ENCODE measurements at regions of chr11 and their contacts with region 1.

Region 1: GRCh38 chr11:32385998-32386397 is 49.3 kb downstream of the WT1 start:
- DNase-seq: peak; percentile 46
- ATAC-seq: peak; percentile 96
- H3K4me3 Mint-ChIP-seq: no peak overlapping the region
- H3K27ac Mint-ChIP-seq: no peak overlapping the region
- H3K4me1 Mint-ChIP-seq: peaks cover 12% of the 10 kb centered on the region
- H3K27me3 Mint-ChIP-seq: no peaks in the 10 kb centered on the region; the same call in 1 of the 2 replicates
- CTCF ChIP-seq: 0 out of 2 replicates have a peak, but pooled peaks have one; percentile 15

Region 2: DNA sequence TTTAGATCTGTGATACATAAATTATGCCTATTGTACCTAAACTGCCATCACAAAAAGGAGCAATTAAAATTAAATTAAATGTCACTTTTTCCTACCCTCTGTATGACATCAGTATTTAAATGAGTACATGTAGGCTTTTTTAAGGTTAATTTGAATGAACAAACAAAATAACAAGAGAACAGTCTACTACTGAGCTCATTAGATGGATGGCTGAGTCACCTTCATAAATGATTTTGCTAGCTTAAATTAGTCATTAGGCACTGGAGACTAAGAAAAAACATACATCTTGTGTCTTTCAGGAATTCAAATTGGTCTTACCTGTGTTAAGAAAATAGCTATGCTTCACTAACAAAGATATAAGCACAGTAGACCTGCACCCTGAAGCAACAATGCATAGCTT is 141.5 kb before region 1 on chr11:
- CTCF ChIA-PET with region 1: no interaction called
- POLR2A ChIA-PET with region 1: no interaction called
- DNase-seq: no peak
- ATAC-seq: no peak
- H3K4me3 Mint-ChIP-seq: no peak overlapping the region
- H3K27ac Mint-ChIP-seq: no peak overlapping the region
- H3K4me1 Mint-ChIP-seq: peaks cover 15% of the 10 kb centered on the region
- H3K27me3 Mint-ChIP-seq: no peaks in the 10 kb centered on the region
- CTCF ChIP-seq: no peak

Region 3: GRCh38 chr11:32279672-32280071 is 106.3 kb before region 1 on chr11:
- CTCF ChIA-PET with region 1: no interaction called
- POLR2A ChIA-PET with region 1: no interaction called
- DNase-seq: no peak
- ATAC-seq: peak; percentile 65
- H3K4me3 Mint-ChIP-seq: no peak overlapping the region
- H3K27ac Mint-ChIP-seq: no peak overlapping the region
- H3K4me1 Mint-ChIP-seq: 0 out of 2 replicates have a peak, but pooled peaks cover 2% of the 10 kb centered on the region
- H3K27me3 Mint-ChIP-seq: peaks cover 6% of the 10 kb centered on the region
- CTCF ChIP-seq: no peak

Region 4: DNA sequence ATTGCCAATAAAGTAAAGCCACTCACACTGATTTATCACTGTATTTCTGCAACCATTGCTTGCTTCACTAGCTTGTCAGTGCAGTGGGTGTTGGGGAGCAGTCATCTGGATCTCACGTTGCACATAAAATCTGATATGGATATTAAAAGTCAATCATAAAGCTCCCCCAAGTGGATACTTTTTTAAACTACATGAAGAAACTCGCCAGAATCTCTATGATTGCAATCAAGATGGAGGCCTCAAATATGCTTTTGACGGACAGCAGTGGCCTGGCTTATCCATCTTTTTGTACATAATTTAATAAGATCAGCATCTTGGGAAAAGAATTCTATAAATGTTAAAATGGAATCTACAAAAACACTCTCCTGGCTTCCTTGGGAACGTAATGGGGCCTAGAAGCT is 88.4 kb before region 1 on chr11:
- CTCF ChIA-PET with region 1: no interaction called
- POLR2A ChIA-PET with region 1: no interaction called
- DNase-seq: no peak
- ATAC-seq: no peak
- H3K4me3 Mint-ChIP-seq: no peak overlapping the region
- H3K27ac Mint-ChIP-seq: no peak overlapping the region
- H3K4me1 Mint-ChIP-seq: peaks cover 12% of the 10 kb centered on the region
- H3K27me3 Mint-ChIP-seq: no peaks in the 10 kb centered on the region; the same call in 1 of the 2 replicates
- CTCF ChIP-seq: no peak

Region 5: DNA sequence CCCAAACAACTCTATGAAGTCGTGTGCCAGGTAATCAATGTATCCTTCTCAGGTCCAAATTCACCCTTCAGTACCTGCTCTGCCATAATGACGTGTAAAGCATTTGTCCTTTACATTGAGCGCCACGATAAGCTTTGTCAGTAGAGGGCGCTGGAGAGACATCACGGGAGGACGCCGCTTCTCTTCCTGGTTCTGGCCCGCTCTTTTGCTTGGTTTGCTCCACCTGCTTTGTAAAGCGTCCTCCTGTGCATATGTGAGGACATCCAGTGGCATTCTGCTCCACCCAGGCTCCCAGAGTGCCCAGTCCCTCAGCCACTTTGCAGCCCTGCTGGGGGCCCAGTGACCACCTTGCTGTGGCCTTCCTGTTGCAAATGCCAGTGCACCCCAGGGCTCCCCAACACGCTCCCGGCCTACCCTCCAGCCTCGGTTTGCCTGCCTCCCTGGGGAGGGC is 11.7 kb before region 1 on chr11:
- CTCF ChIA-PET with region 1: interaction called, 19 read pairs
- POLR2A ChIA-PET with region 1: no interaction called
- DNase-seq: peak; percentile 86
- ATAC-seq: peak; percentile 98
- H3K4me3 Mint-ChIP-seq: no peak overlapping the region
- H3K27ac Mint-ChIP-seq: no peak overlapping the region
- H3K4me1 Mint-ChIP-seq: 0 out of 2 replicates have a peak, but pooled peaks cover 6% of the 10 kb centered on the region
- H3K27me3 Mint-ChIP-seq: peaks cover 10% of the 10 kb centered on the region
- CTCF ChIP-seq: peak; percentile 75

Region 6: DNA sequence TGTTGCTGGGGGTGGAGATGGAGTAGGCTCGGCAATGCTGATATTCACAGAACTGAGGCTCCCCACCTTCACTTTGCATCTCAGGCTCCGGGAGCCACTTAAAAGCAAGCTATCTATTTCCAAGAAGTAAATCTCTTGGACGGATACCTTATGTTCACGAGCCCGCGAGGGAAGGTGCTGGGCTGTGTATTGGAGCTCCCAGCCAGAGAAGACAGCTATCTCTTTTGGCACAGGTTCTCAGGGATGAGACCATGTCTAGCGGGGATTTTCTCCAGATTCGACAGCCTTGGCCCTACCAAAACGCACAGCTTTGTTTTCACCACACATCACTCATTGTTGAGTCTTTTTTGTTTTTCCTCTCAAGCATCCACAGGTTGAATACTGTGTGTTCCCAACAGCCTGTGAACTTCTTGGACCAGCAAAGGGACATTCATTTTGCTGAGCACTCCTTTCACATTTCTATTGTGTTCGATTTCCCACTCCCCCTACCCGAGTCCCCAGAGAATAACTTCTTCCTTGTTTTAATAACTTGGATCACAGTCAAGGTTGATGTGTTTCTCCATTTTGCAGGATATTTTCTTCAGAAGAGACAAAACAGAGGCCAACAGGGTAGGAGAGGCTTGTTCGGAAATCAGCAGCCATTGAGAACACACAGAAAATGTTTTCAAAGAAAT is 26.1 kb after region 1 on chr11:
- CTCF ChIA-PET with region 1: interaction called, 5 read pairs
- POLR2A ChIA-PET with region 1: interaction called, 16 read pairs
- DNase-seq: no peak
- ATAC-seq: no peak
- H3K4me3 Mint-ChIP-seq: no peak overlapping the region
- H3K27ac Mint-ChIP-seq: no peak overlapping the region
- H3K4me1 Mint-ChIP-seq: peaks cover 6% of the 10 kb centered on the region
- H3K27me3 Mint-ChIP-seq: peaks cover 15% of the 10 kb centered on the region
- CTCF ChIP-seq: no peak

Region 7: DNA sequence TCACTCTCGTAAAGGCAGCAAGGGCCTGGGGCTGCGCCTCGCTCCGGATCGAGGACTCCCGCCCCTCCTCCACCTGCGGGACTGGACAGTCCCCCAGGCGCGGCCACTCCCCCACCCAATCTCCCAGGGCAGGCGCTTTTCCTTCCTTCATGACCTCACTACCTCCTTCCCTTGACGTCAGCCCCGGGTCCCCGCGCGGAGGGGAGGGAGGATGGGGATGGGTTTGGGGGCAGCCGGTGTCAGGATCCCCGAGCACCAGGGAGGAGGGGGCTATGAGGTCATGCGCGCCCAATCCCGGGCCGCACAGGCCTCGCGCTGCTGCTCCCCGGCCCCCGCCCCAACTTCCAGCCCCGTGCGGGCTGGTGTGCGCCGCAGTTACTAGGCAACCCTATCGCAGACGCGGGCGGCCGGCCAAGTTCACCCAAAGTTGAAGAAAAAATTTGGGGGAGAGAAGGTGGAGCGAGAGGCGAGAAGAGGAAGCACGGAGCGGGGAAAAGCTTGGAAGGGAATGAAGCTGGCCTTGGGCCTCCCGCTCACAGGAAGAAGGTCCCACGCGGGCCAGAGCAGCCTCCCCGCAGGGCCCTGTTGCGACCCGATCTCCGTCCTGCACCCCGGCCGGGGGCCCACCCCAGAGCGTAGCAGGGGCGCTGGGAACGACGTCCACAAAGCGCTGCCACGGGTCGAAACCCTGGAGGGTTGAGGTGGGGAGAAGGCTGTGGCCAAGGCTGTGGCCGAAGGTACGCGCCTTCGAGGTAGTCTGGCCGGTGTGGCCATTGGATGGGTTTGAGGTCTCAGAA is 41.0 kb after region 1 on chr11:
- CTCF ChIA-PET with region 1: interaction called, 11 read pairs
- POLR2A ChIA-PET with region 1: no interaction called
- DNase-seq: peak; percentile 65
- ATAC-seq: peak; percentile 32
- H3K4me3 Mint-ChIP-seq: peak overlapping the region; percentile 72
- H3K27ac Mint-ChIP-seq: no peak overlapping the region
- H3K4me1 Mint-ChIP-seq: peaks cover 42% of the 10 kb centered on the region
- H3K27me3 Mint-ChIP-seq: peaks cover 100% of the 10 kb centered on the region
- CTCF ChIP-seq: no peak